Posterior vena cava (tissue), 2 donors: ENCODE measurements at regions of chr5 and their contacts with region 1.

Region 1: DNA sequence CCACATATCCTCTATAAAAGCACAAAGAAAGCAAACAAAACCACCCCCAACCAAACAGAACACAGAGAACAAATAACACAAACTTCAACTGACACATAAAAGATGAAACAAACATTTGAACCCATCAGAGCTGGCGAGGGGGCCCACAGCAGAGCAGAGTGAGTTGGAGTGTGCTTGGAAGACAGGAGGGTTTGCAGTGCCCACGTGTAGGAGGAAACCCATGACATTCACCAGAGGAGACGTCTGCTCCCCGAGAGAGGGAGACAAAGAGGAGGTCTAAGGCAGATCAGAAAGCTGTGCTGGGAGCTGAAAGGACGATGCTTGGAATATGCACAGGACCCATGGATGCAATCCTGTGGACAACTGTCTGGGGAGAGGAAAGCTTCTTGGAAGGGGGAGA is 27.0 kb downstream of the MRPL36 start:
- DNase-seq: no peak

Region 2: GRCh38 chr5:1827886-1828397 is 55.3 kb after region 1 on chr5:
- intact Hi-C with region 1: loop called in 1 of 2 experiments (anchors 2 kb)
- DNase-seq: peak; percentile 58

Region 3: GRCh38 chr5:1838013-1838412 is 65.4 kb after region 1 on chr5:
- intact Hi-C with region 1: no loop called
- DNase-seq: no peak